Gastrocnemius medialis (tissue), 4 donors: ENCODE measurements at regions of chr20 and their contacts with region 1.

Region 1: GRCh38 chr20:23782366-23782985 is 31.7 kb upstream of the CST1 start:
- DNase-seq: no peak
- ATAC-seq: no peak
- H3K4me3 ChIP-seq: no peak overlapping the region
- H3K27ac ChIP-seq: no peak overlapping the region
- H3K4me1 ChIP-seq: no peaks in the 10 kb centered on the region
- H3K27me3 ChIP-seq: no peaks in the 10 kb centered on the region
- CTCF ChIP-seq: peak in 2 of 5 experiments; percentile 22 to 34
- POLR2A ChIP-seq: no peak

Region 2: GRCh38 chr20:23826541-23827021 is 44.1 kb after region 1 on chr20 and contains the start of gene CST2:
- in situ Hi-C with region 1: no loop called
- intact Hi-C with region 1: no loop called
- DNase-seq: no peak
- ATAC-seq: no peak
- H3K4me3 ChIP-seq: no peak within 1 kb of the TSS
- H3K27ac ChIP-seq: no peak within 1 kb of the TSS
- H3K4me1 ChIP-seq: no peaks in the 10 kb centered on the region
- H3K27me3 ChIP-seq: no peaks in the 10 kb centered on the region
- CTCF ChIP-seq: no peak
- POLR2A ChIP-seq: no peak
- total RNA-seq, gene CST2: not detected

Region 3: DNA sequence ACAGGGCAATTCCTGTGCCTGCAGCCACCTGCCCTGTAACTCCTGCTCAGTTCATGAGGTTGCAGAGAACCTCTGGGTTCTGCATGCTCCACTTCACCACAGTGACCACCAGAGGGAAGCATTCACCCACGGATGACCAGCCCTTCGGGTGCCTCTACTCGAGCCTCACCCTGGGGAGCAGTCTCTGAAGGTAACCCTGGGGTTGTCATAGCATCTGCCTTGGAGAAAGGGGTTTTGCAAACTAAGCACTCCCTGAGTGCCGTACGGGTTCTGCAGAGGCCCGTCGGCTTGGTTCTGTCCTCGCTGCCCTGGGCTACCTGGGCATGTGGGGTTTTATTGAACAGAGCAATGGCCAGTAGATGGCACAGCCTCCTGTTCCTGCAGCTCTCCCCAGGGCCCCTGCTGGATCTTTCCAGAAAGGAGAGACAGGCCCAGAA is 107.3 kb after region 1 on chr20:
- in situ Hi-C with region 1: loop called in 1 of 4 experiments (anchors 25 kb)
- intact Hi-C with region 1: no loop called
- DNase-seq: no peak
- ATAC-seq: no peak
- H3K4me3 ChIP-seq: no peak overlapping the region
- H3K27ac ChIP-seq: no peak overlapping the region
- H3K4me1 ChIP-seq: no peaks in the 10 kb centered on the region
- H3K27me3 ChIP-seq: no peaks in the 10 kb centered on the region
- CTCF ChIP-seq: peak in 4 of 5 experiments; percentile 17 to 55 (median 42)
- POLR2A ChIP-seq: no peak

Region 4: DNA sequence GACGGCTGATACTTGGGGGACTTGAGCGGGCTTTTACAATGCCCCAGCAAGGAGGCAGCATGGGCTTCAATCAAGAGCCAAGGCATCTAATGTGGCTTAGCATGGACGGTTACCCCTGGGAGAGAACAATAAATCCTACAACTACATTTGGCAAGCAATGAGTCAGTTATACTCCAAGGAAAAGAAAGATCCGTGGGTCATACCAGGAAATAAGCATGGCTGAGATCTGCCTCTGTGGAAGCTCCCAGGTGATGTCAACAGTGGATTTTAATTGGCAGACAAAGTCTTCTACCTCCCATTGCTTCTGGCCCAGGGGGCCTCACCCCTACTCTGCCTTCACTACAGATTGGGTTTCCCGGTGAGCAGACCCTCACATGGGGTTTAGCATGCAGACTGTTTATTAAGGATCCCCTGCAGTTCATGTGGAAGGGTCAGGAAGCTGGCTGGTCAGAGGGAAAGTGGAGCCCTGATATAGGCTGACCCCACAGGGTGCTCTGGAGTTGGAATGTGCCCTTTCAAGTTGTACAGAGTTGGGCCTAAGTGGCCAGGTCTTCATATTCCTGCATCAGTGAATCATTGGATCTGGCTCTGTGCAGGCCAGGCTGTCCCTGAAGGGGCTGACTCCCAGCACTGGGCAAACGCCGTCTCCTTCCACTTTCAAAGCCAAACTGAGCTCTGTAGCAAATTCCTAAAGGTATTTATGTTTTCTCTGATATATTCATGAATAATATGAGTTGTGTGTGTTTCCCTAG is 297.4 kb after region 1 on chr20:
- in situ Hi-C with region 1: no loop called
- intact Hi-C with region 1: no loop called
- DNase-seq: no peak
- ATAC-seq: no peak
- H3K4me3 ChIP-seq: no peak overlapping the region
- H3K27ac ChIP-seq: no peak overlapping the region
- H3K4me1 ChIP-seq: no peaks in the 10 kb centered on the region
- H3K27me3 ChIP-seq: no peaks in the 10 kb centered on the region
- CTCF ChIP-seq: no peak
- POLR2A ChIP-seq: no peak